Lower leg skin (tissue), 4 donors: ENCODE measurements at regions of chr1 and their contacts with region 1.

Region 1: DNA sequence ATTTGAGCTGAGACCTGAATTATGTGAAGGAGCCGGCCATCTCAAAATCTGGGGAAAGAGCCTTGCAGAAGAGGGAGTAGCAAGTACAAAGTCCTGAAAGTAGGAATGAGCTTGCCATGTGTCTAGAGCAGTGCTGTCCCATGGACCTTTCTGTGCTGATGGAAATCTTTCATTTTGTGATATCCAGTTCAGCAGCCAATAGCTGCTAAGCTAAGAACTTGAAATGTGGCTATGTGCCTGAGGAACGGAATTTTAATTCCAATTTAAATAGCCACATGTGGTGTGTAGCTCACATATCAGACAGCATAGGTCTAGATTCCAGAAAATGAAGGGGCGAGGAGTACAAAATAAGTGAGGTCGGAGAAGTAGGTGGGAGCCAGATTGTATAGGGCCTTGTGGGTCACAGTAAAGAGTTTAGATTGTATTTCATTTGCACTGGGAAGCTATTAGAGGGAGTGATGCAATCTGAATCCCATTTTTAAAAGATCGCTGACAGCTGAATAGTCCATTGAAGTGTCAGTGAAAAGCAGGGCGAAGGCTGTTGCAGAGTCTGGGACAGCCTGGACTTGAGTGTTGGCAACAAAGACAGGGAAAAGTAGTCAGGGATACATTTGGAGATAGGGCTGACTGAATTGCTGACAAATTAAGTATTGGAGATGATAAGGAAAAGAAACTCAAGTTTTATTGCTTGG is 80.3 kb downstream of the TMEM200B start:
- DNase-seq: no peak
- H3K4me3 ChIP-seq: no peak overlapping the region
- CTCF ChIP-seq: no peak
- POLR2A ChIP-seq: no peak

Region 2: GRCh38 chr1:28668191-28668955 is 375.0 kb before region 1 on chr1 and contains the start of gene GMEB1:
- intact Hi-C with region 1: no loop called
- DNase-seq: peak; percentile 71 to 96
- H3K4me3 ChIP-seq: peak within 1 kb of the TSS; percentile 94
- CTCF ChIP-seq: no peak
- POLR2A ChIP-seq: no peak
- total RNA-seq, gene GMEB1: 10.8 to 12.0 (median 11.6) TPM

Region 3: DNA sequence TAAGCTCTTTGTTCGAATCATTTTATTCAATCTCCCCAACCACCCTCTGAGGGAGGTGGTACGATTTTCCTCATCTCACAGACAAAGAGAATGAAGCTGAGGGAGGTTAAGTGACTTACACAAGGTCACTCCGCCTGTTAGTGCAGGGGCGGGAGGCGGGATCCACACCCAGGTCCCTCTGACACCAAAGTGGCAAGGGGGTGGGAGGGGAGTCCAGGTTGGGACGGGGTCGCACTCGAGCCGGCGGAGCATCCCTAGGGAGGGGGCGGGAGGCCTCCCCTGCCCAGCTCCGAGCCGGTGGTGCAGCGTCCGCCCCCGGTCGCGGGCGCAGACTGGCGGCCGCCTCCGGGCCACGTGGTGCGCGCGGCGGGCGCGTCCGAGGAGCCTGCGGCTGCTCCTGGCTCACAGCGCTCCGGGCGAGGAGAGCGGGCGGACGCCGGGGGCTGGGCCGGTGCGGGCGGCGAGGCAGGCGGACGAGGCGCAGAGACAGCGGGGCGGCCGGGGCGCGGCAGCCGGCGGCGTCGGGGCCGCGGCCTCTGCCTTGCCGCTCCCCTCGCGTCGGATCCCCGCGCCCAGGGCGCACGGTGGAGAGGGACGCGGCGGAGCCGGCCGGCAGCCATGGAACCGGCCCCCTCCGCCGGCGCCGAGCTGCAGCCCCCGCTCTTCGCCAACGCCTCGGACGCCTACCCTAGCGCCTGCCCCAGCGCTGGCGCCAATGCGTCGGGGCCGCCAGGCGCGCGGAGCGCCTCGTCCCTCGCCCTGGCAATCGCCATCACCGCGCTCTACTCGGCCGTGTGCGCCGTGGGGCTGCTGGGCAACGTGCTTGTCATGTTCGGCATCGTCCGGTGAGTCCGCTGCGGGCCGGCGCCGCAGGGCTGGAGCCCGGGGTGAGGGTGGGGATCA is 231.4 kb before region 1 on chr1 and contains the start of gene OPRD1:
- intact Hi-C with region 1: no loop called
- DNase-seq: no peak
- H3K4me3 ChIP-seq: no peak within 1 kb of the TSS
- CTCF ChIP-seq: no peak
- POLR2A ChIP-seq: no peak
- total RNA-seq, gene OPRD1: not detected

Region 4: GRCh38 chr1:29202584-29203340 is 159.3 kb after region 1 on chr1:
- intact Hi-C with region 1: loop called (anchors 10 kb)
- DNase-seq: peak; percentile 96 to 99
- H3K4me3 ChIP-seq: no peak overlapping the region
- CTCF ChIP-seq: peak in 1 of 3 donors; percentile 89
- POLR2A ChIP-seq: no peak

Region 5: DNA sequence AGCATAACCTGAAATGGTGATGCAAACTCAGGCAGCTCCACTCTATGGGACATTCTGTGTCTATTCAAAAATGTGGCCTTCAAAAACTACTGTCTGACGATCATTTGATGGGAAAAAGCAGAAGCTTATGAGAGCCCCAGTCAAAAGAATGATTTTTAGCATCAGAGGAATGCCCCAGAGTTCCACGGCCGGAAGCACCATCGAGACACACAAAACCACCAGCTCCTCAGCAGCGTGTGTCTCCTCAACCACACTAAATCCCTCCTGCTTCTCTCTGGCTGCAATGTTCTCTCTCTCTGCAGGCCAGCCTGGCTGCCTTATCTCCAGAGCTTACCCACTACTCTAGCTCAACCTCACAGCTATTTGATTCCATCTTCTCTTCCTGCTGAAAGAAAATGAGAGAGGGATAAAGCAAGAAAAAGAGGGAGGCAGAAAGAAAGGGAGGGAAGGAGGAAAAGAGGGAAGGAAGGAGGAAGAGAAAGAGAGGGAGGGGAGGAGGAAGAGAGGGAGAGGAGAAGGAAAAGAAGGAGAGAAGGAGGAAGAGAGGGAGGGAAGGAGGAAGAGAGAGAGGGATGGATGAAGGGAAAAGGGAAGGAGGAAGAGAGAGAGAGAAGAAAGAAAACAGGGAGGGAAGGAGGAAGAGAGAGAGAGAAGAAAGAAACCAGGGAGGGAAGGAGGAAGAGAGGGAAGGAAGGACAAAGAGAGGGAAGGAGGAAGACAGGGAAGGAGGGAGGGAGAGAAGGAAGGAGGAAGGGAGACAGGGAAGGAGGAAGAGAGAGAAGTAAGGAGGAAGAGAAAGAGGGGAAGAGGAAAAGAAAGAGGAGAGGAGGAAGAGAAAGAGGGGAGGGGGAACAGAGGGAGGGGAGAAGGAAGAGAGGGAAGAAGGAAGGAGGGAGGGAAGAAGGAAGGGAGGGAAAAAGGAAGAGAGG is 1747.7 kb after region 1 on chr1:
- intact Hi-C with region 1: no loop called
- DNase-seq: no peak
- H3K4me3 ChIP-seq: no peak overlapping the region
- CTCF ChIP-seq: no peak
- POLR2A ChIP-seq: no peak